Common myeloid progenitor, CD34-positive (primary cell): ENCODE measurements at regions of chr12 and their contacts with region 1.

Region 1: GRCh38 chr12:53039851-53040250 is 10.0 kb upstream of the TNS2 start:
- DNase-seq: no peak
- H3K4me3 ChIP-seq: no peak overlapping the region
- H3K27ac ChIP-seq: no peak overlapping the region
- H3K4me1 ChIP-seq: peaks cover 0 to 9% (median 4%) of the 10 kb centered on the region in 4 experiments
- H3K27me3 ChIP-seq: peaks cover 0 to 1% (median 0%) of the 10 kb centered on the region in 5 experiments

Region 2: DNA sequence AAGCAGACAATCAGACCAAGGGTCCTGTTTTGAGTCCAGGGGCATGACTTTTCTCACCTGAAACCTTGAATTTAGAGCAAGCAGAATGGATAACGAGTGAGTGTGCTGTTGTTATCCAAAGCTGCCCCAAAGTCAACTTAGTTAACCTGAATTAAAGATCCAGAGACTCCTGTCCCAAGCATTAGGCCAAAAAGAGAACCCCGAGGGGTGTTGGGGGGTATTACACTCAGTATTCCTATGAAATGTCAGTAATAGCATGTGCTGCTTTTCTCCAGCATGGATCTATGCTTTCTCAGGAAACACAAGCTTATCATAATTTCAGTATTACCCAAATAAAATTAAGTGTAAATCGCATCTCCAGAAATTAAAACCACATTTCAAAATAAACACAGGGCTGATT is 14.6 kb before region 1 on chr12:
- CTCF ChIA-PET with region 1: interaction called, 20 read pairs
- POLR2A ChIA-PET with region 1: interaction called, 3 read pairs
- DNase-seq: no peak
- H3K4me3 ChIP-seq: no peak overlapping the region
- H3K27ac ChIP-seq: no peak overlapping the region
- H3K4me1 ChIP-seq: no peaks in the 10 kb centered on the region
- H3K27me3 ChIP-seq: no peaks in the 10 kb centered on the region